Posterior vena cava (tissue), 2 donors: ENCODE measurements at regions of chr6 and their contacts with region 1.

Region 1: DNA sequence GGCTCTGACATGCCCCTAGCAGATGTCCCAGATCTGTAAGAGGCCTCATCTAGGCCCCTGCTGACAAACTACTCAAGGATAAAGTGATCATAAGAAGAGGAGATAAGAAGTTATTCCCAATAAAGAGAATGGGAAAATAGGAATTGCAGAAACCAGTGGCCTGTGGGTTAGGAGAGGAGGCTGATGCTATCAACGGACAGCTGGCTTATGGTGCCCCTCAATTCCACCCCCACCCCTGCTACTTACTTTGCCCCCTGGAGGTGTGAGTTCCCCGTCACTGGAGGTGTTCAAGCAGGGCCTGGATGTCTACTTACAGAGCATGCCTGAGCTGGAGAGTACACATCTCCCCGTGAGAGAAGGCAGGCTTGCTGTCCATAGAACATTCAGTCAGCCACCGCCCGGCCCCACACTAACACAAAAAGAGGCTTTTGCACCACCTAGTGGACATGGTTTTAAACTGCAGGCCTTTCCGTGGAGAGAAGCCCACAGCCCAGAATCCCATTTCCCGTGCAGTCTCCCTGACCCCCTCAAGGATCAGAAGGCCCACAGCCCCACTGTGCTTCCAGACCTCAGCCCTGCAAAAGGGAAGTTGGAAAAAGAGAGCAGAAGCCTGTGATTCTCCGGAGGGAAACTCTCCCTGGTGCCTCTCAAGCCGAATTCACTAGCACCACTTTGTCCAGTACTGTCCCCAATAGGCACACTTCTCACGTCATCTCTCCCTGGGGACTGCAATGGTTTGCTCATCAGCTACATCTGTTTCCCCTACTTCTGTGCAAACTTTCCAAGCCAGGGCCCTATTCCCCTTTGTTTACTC is 23.8 kb upstream of the BNIP5 start:
- DNase-seq: peak; percentile 91

Region 2: GRCh38 chr6:36302227-36302976 is 58.0 kb before region 1 on chr6:
- intact Hi-C with region 1: loop called (anchors 5 to 10 kb)
- DNase-seq: peak; percentile 92